ENCODE measurements at regions of chr16 and their contacts with region 1.

Region 1: DNA sequence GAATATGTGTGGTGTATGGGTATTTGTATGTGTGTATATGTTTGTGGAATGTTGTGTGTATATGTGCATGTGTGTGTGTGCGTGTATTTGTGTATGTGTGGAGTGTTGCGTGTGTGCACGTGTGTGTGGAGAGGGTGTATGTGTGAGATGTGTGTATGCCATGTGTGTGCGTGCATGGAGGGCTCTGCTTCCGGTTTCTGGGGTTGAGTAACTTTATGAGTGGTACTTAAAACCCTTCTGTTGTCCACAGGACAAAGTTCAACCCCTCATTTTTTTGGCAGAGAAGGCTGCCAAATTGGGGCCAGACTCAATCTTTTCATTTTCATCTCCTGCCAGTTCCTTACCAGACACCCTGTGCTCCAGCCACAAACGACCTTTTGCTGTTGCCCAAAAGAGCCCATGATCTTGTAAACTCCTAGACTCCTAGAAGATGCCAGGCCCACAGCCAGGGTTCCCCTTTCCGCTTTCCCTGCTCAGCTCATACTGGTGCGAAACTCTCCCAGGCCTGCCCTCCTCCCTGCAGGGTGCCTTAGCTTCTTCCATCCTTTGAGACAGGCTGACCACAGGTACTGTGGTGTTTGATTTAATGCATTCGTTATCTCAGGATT is 100.2 kb downstream of the CMIP start:
- DNase-seq: no peak
- H3K4me3 ChIP-seq: no peak overlapping the region
- H3K27ac ChIP-seq: no peak overlapping the region
- H3K4me1 ChIP-seq: peaks cover 31% of the 10 kb centered on the region
- H3K27me3 ChIP-seq: no peaks in the 10 kb centered on the region
- CTCF ChIP-seq: no peak
- POLR2A ChIP-seq: no peak

Region 2: DNA sequence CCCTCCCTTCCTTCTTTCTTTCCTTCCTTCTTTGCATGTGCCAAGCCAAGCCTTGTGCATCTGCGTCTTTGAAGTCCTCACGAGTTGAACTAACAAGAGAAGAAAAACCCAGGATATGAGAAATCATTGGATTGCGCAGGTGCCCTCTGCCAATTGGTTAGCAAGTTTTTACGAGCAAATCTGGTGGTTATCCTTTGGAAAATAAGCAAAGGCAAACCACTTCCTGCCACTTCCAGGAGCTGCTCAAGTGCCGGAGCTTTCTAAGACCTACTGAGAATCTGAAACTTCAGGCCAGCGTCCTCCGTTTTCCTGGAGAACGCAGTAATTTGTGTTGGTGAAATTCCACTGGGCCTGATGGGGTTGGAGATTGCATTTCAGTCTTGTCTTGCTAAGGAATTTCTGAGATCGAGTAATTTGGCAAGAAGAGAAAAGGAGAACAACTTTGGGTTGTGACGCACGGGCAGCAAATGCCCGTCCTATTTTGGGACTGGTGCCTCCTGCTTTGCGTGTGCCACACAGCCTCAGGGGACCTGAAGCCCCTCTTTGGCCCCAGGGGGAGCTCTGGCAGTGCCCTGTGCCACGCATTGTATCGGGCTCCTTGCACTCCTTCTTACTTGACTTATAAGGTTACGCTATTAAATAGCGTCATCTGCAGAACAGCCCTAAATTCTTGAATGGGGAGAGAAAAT is 43.8 kb before region 1 on chr16:
- CTCF ChIA-PET with region 1: no interaction called
- POLR2A ChIA-PET with region 1: interaction called, 3 read pairs
- dilution Hi-C with region 1: no loop called
- intact Hi-C with region 1: loop called (anchors 5 kb)
- DNase-seq: peak; percentile 85
- H3K4me3 ChIP-seq: no peak overlapping the region
- H3K27ac ChIP-seq: peak overlapping the region; percentile 46
- H3K4me1 ChIP-seq: peaks cover 57% of the 10 kb centered on the region
- H3K27me3 ChIP-seq: no peaks in the 10 kb centered on the region
- CTCF ChIP-seq: no peak
- POLR2A ChIP-seq: no peak

Region 3: DNA sequence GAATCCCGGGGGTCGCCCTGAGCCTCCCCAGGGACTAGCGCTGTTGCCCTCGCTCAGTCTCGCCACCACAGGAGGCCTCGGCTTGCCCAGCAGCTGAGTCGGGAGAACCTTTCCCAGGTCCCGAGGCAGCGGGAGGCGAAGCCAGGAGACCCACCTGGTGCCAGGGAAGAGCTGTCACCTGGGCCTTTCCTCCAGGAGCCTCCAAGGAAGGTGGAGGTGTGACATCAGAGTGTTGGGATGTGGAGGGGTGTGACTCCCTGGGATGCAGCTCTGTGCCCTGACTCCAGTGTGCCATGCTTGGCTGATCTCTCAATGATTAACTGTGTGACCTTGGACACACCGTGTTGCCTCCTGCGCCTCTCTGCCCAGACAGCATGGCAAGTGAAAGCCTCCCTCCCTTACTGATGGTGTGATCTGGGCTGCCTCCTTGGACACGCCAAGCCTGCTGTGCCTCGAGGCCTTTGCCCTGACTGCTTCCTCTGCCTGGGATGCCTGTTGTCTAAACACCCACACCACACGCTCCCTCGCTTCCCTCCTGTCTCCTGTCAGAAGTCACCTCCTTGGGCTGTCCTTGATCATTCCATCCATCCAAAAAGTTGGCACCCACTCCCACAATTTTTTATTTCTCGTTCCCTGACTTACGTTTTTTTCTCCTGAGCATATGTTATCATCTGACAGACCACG is 12.1 kb before region 1 on chr16:
- CTCF ChIA-PET with region 1: no interaction called
- POLR2A ChIA-PET with region 1: no interaction called
- dilution Hi-C with region 1: no loop called
- intact Hi-C with region 1: no loop called
- DNase-seq: no peak
- H3K4me3 ChIP-seq: no peak overlapping the region
- H3K27ac ChIP-seq: no peak overlapping the region
- H3K4me1 ChIP-seq: no peaks in the 10 kb centered on the region
- H3K27me3 ChIP-seq: no peaks in the 10 kb centered on the region
- CTCF ChIP-seq: no peak
- POLR2A ChIP-seq: no peak